Endothelial cell of umbilical vein (primary cell): ENCODE measurements at regions of chr12 and their contacts with region 1.

Region 1: GRCh38 chr12:119412811-119413794 is 78.6 kb downstream of the CCDC60 start:
- DNase-seq: peak; percentile 68
- H3K4me3 ChIP-seq: no peak overlapping the region
- H3K27ac ChIP-seq: no peak overlapping the region
- H3K4me1 ChIP-seq: no peaks in the 10 kb centered on the region
- H3K27me3 ChIP-seq: no peaks in the 10 kb centered on the region
- CTCF ChIP-seq: peak; percentile 79 to 80
- POLR2A ChIP-seq: no peak

Region 2: DNA sequence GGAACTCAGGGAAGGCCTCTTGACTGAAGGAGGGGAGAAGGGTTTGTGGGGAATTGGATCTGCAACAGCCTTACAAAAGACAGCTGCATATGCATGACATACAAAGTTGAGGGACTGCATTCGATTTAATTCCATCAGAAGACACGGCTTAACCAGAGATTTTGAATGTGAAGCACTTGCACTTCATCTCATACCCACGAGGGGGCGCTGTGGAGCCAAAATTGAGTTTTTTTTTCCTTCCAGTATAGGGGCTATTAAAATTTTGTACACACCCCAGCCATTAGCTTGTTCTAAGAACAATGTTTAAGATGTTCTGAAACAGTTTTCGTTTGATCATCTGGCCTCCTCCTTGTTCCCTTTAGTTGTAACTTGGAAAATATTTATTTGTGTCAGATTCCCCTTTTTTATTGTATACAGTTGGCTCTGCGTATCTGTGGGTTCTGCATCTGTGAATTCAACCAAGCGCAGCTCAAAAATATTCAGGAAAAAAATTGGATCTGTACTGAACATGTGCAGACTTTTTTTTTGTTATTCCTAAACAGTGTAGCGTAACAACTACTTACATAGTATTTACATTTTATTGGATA is 1035.1 kb before region 1 on chr12:
- CTCF ChIA-PET with region 1: interaction called, 19 read pairs
- POLR2A ChIA-PET with region 1: no interaction called
- dilution Hi-C with region 1: no loop called
- intact Hi-C with region 1: no loop called
- DNase-seq: peak; percentile 69
- H3K4me3 ChIP-seq: peak overlapping the region; percentile 80 to 94 (median 92)
- H3K27ac ChIP-seq: no peak overlapping the region
- H3K4me1 ChIP-seq: peaks cover 16% of the 10 kb centered on the region
- H3K27me3 ChIP-seq: no peaks in the 10 kb centered on the region
- CTCF ChIP-seq: peak; percentile 82 to 88
- POLR2A ChIP-seq: no peak

Region 3: GRCh38 chr12:118979763-118980406 is 433.2 kb before region 1 on chr12:
- CTCF ChIA-PET with region 1: interaction called, 27 read pairs
- POLR2A ChIA-PET with region 1: no interaction called
- dilution Hi-C with region 1: no loop called
- intact Hi-C with region 1: loop called (anchors 1 kb)
- DNase-seq: peak; percentile 29
- H3K4me3 ChIP-seq: no peak overlapping the region
- H3K27ac ChIP-seq: no peak overlapping the region
- H3K4me1 ChIP-seq: no peaks in the 10 kb centered on the region
- H3K27me3 ChIP-seq: no peaks in the 10 kb centered on the region
- CTCF ChIP-seq: peak; percentile 60 to 73
- POLR2A ChIP-seq: no peak

Region 4: DNA sequence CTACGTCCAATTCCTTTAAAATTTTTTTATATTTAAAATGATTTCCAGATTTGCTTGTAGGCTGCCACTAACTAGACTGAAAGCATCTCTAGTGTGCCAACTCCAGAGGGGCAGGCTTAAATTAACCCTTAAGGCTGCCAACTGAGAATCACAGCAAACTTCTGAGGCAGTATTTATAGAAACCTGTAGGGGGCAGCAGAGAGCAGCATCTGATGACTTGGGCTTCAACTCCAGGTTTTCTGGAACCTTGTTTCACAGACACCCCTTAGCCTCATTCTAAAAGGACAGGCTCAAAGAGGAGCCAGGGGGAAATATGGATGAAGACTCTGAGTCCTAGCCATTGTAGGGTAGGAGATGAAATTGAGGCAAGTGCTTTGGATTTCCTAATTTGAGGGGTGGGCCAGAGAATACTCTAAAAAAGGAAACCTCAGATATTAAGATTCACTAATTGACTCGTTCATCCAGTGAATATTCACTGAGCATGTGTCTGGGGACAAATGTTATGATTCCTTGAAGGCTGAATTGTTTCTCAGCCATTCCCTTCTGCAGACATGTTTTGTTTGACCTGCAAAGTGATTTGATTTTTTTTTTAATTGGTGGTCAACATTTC is 297.7 kb before region 1 on chr12:
- CTCF ChIA-PET with region 1: interaction called, 50 read pairs
- POLR2A ChIA-PET with region 1: no interaction called
- dilution Hi-C with region 1: no loop called
- intact Hi-C with region 1: loop called (anchors 1 kb)
- DNase-seq: peak; percentile 43
- H3K4me3 ChIP-seq: no peak overlapping the region
- H3K27ac ChIP-seq: no peak overlapping the region
- H3K4me1 ChIP-seq: no peaks in the 10 kb centered on the region
- H3K27me3 ChIP-seq: no peaks in the 10 kb centered on the region
- CTCF ChIP-seq: peak; percentile 68 to 75
- POLR2A ChIP-seq: no peak

Region 5: DNA sequence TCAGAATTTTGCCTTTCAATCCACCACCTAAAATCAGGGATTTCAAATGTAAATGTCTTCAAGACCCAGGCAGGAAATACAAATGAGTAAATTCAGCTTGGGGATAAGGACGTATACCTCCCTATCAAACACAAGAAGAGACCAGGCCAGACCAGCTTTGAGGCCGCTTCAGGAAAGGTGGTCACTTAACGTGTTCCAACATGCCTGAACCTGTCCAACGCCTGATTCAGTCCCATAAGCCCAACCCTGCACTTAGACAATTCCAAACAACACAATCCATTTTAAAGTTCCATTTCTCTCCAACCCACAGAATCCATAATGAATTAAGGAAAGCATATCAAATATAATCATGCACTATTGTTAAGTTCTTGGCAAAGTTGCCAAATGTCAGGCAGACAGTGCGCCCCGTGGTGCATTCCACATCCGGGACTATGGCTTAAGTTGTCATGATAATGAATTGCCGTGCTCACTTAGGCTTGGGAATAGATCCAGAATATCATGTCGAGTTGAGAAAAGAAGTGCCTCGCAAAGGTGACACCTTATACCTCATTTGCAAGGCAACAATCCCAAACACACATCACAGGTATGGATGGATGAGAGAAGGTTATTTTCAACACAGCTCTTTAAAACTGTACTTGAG is 43.1 kb before region 1 on chr12:
- CTCF ChIA-PET with region 1: no interaction called
- POLR2A ChIA-PET with region 1: no interaction called
- dilution Hi-C with region 1: no loop called
- intact Hi-C with region 1: no loop called
- DNase-seq: no peak
- H3K4me3 ChIP-seq: no peak overlapping the region
- H3K27ac ChIP-seq: no peak overlapping the region
- H3K4me1 ChIP-seq: no peaks in the 10 kb centered on the region
- H3K27me3 ChIP-seq: no peaks in the 10 kb centered on the region
- CTCF ChIP-seq: no peak
- POLR2A ChIP-seq: no peak

Region 6: GRCh38 chr12:119399301-119399700 is 13.8 kb before region 1 on chr12:
- CTCF ChIA-PET with region 1: interaction called, 15 read pairs
- POLR2A ChIA-PET with region 1: no interaction called
- dilution Hi-C with region 1: no loop called
- intact Hi-C with region 1: no loop called
- DNase-seq: no peak
- H3K4me3 ChIP-seq: no peak overlapping the region
- H3K27ac ChIP-seq: no peak overlapping the region
- H3K4me1 ChIP-seq: no peaks in the 10 kb centered on the region
- H3K27me3 ChIP-seq: no peaks in the 10 kb centered on the region
- CTCF ChIP-seq: no peak
- POLR2A ChIP-seq: no peak

Region 7: GRCh38 chr12:119444456-119445044 is 31.4 kb after region 1 on chr12:
- CTCF ChIA-PET with region 1: interaction called, 10 read pairs
- POLR2A ChIA-PET with region 1: interaction called, 3 read pairs
- dilution Hi-C with region 1: no loop called
- intact Hi-C with region 1: no loop called
- DNase-seq: peak; percentile 28
- H3K4me3 ChIP-seq: no peak overlapping the region
- H3K27ac ChIP-seq: no peak overlapping the region
- H3K4me1 ChIP-seq: no peaks in the 10 kb centered on the region
- H3K27me3 ChIP-seq: no peaks in the 10 kb centered on the region
- CTCF ChIP-seq: peak; percentile 60 to 90
- POLR2A ChIP-seq: no peak